GM10248 (cell line): ENCODE measurements at regions of chr16 and their contacts with region 1.

Region 1: DNA sequence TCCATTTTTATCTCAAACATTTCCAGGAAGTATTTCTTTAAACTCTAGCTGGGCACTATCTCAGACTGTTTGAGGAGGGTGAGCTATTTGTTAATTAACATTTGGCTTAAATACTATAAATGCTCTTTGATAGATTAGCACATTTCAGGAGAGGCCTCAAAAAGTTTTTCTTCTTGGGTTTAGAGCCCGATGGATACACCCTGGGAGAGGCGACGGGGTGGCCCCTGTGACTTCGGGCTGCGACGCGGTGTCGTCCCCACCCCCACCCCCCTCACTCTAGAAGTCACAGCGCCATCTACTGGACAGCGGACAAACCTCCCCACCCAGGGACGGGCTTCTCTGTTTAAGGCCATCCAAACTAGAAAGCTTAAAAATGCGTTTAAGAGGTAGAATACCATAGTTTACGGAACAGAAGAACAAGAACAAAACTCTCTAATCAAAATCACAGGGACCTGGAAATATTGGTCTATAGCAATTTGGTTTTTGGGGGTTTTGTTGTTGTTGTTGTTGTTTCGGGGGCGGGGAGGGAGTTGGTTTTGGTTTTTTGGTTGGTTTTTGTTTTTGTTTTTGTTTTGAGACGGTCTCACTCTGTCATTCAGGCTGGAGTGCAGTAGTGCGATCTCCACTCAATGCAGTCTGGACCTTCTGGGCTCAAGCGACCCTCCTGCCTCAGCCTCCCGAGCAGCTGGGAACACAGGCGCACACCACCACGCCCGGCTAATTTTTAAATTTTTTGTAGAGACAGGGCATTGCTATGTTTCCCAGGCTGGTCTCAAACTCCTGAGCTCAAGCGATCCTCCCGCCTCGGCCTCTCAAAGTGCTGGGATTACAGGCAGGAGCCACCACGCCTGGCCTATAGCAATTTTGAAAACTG is 254.4 kb downstream of the C16orf95 start:
- DNase-seq: peak; percentile 85
- CTCF ChIP-seq: peak; percentile 69

Region 2: GRCh38 chr16:86563489-86564345 is 499.1 kb before region 1 on chr16:
- CTCF ChIA-PET with region 1: interaction called, 52 read pairs
- POLR2A ChIA-PET with region 1: no interaction called
- DNase-seq: peak; percentile 89
- CTCF ChIP-seq: peak; percentile 99

Region 3: GRCh38 chr16:87043231-87044031 is 19.4 kb before region 1 on chr16:
- CTCF ChIA-PET with region 1: interaction called, 10 read pairs
- POLR2A ChIA-PET with region 1: no interaction called
- DNase-seq: no peak
- CTCF ChIP-seq: no peak

Region 4: GRCh38 chr16:87052506-87052905 is 10.3 kb before region 1 on chr16:
- CTCF ChIA-PET with region 1: interaction called, 12 read pairs
- POLR2A ChIA-PET with region 1: no interaction called
- DNase-seq: no peak
- CTCF ChIP-seq: no peak

Region 5: DNA sequence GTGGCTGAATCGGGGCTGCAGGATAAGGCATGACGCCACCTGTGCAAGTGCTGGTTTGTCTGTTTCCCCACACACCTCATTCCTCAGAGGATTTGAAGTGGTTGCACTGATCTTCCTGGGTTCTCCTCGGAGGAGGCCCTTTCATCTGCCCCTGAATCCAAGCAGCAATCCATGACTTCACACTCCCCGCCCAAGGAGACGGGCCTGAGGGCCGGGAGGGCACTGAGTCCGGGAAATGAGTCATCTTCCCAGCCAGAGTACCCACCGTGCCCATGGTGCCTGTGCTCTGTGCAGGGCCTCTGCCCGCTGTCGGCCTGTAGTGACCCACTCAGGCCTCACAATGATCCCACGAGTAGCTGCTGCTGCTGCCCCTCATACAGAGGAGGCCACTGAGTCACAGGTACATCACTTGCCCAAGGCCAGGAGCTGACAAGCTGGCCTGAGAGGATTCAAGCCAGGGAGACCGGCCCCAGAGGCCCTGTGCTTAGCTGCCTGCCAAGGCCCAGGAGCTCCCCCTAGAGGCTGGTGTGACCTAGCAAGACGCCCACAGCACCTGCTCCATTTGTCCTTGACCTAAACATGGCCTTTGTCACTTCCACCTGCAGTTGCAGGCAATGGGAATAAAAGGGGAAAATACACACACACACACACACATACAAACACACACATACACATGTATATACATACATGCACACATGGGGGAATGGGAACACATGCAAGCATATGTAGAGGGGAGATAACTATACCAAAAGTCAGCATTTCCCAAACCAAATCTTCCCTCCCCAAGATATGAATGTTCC is 14.3 kb after region 1 on chr16:
- CTCF ChIA-PET with region 1: interaction called, 17 read pairs
- POLR2A ChIA-PET with region 1: no interaction called
- DNase-seq: peak; percentile 67
- CTCF ChIP-seq: peak; percentile 51

Region 6: GRCh38 chr16:87178977-87179376 is 116.2 kb after region 1 on chr16:
- CTCF ChIA-PET with region 1: no interaction called
- POLR2A ChIA-PET with region 1: no interaction called
- DNase-seq: no peak
- CTCF ChIP-seq: no peak